CD4-positive, alpha-beta memory T cell (primary cell): ENCODE measurements at regions of chr9 and their contacts with region 1.

Region 1: GRCh38 chr9:69190086-69190862 is 16.2 kb downstream of the TJP2 start:
- DNase-seq: no peak
- H3K4me3 ChIP-seq: no peak overlapping the region
- H3K4me3 Mint-ChIP-seq: no peak overlapping the region
- H3K27ac ChIP-seq: no peak overlapping the region
- H3K27ac Mint-ChIP-seq: no peak overlapping the region
- H3K4me1 ChIP-seq: peaks cover 9% of the 10 kb centered on the region
- H3K4me1 Mint-ChIP-seq: peaks cover 2 to 10% (median 7%) of the 10 kb centered on the region in 4 donors
- H3K27me3 ChIP-seq: no peaks in the 10 kb centered on the region
- H3K27me3 Mint-ChIP-seq: no peaks in the 10 kb centered on the region

Region 2: DNA sequence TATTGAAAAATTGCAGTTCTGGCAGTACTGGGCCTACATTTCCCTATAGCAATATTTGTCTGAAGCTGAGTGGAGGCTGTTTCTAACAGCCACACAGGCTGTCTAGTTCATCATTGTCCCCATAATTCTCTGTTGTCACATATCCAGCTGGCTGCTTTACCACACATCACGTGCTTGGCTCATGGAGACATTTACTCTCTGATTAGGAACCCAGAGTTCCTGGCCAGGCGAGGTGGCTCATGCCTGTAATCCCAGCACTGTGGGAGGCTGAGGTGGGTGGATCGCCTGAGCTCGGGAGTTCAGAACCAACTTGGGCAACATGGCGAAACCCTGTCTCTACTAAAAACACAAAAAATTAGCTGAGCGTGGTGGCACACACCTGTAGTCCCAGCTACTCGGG is 752.5 kb before region 1 on chr9:
- CTCF ChIA-PET with region 1: no interaction called
- POLR2A ChIA-PET with region 1: no interaction called
- intact Hi-C with region 1: no loop called
- DNase-seq: no peak
- H3K4me3 ChIP-seq: no peak overlapping the region
- H3K4me3 Mint-ChIP-seq: no peak overlapping the region
- H3K27ac ChIP-seq: no peak overlapping the region
- H3K27ac Mint-ChIP-seq: no peak overlapping the region
- H3K4me1 ChIP-seq: no peaks in the 10 kb centered on the region
- H3K4me1 Mint-ChIP-seq: no peaks in the 10 kb centered on the region
- H3K27me3 ChIP-seq: no peaks in the 10 kb centered on the region
- H3K27me3 Mint-ChIP-seq: peaks cover 0 to 2% of the 10 kb centered on the region in 2 donors

Region 3: DNA sequence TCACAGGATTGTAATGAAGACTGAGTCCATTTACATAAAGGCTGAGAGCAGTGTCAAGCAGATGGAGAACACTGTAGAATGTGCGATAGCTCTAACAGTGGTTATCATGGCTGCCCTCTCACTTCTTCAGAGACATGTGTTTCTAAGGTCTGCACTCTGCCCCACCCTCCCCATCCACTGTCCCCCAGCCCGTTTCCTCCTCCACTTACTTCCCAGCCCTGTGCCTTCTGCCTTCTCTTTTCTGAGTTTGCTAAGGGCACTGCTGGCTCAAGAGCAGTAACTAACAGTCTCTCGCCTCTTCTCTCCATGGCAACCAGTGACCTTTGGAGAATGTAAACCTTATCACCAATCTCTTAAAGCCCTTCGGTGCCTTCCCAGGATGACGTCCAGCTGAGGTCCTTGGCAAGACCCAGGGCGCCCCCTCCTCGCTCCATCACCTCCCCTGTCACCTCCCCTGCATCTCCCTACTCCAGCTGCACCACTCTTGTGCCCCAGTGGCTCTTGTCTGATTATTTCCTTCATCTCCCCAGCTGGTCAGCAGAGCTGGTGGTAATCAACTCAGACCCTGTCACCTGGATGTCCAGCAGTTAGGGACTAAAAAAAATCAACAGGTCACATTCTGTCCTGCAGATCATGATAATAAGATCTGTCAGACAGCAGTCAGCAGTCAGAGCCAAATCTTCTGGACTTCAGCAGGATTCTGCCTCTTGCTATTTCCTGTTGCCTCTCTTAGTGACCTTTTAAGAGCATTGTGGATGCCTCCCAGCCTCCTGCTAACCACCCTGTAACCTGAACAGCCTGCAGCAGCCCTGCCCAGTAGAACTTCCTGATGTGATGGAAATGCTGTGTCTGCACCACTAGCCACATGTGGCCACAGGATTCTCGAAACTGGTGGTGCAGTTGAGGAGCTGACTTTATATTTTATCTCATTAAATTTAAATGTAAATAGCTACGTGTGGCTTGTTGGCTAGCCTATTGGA is 145.7 kb before region 1 on chr9:
- CTCF ChIA-PET with region 1: interaction called, 24 read pairs
- POLR2A ChIA-PET with region 1: no interaction called
- intact Hi-C with region 1: no loop called
- DNase-seq: no peak
- H3K4me3 ChIP-seq: no peak overlapping the region
- H3K4me3 Mint-ChIP-seq: no peak overlapping the region
- H3K27ac ChIP-seq: no peak overlapping the region
- H3K27ac Mint-ChIP-seq: peak overlapping the region in 5 of 7 donors; percentile 7 to 66 (median 33)
- H3K4me1 ChIP-seq: peaks cover 5% of the 10 kb centered on the region
- H3K4me1 Mint-ChIP-seq: peaks cover 15 to 37% (median 33%) of the 10 kb centered on the region in 4 donors
- H3K27me3 ChIP-seq: no peaks in the 10 kb centered on the region
- H3K27me3 Mint-ChIP-seq: no peaks in the 10 kb centered on the region

Region 4: DNA sequence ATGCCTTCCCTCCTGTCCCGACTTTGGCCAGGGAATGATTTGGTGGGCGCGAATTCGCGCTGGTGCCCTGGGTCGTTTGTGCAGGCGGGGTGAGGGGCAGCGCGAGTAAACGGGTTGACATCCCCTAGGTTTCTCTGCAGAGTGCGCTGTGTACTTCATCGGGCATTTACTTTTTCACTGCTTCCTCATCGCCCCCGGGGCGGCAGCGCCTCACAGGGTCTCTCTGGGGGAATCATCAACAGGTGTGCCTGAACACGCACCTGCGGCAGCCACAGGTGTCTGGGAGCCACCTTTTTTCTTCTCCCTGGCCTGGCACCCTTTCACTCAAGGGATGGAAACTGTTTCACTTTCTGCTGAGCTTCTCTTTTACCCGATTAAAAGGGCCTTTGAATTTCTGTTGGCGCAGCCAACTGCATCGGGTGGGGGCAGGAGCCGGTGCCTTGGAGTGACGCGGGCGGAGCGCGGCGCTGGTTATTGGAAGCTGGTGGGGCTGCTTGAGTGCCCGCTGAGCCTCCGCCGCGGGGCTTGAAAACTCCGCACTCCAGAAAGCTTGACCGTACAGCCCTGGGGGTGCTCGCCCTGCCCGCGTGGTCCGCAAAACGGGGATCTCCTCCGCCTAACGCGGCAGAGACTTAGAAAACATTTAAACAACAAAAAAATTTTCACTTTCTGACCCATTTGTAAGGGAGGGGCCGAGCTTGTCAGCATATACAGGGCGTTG is 68.3 kb before region 1 on chr9:
- CTCF ChIA-PET with region 1: interaction called, 11 read pairs
- POLR2A ChIA-PET with region 1: no interaction called
- intact Hi-C with region 1: no loop called
- DNase-seq: peak; percentile 44 to 59 (median 54)
- H3K4me3 ChIP-seq: peak overlapping the region; percentile 34 to 75
- H3K4me3 Mint-ChIP-seq: peak overlapping the region; percentile 93 to 97 (median 96)
- H3K27ac ChIP-seq: no peak overlapping the region
- H3K27ac Mint-ChIP-seq: peak overlapping the region; percentile 31 to 92 (median 87)
- H3K4me1 ChIP-seq: peaks cover 13% of the 10 kb centered on the region
- H3K4me1 Mint-ChIP-seq: peaks cover 6 to 19% (median 11%) of the 10 kb centered on the region in 4 donors
- H3K27me3 ChIP-seq: no peaks in the 10 kb centered on the region
- H3K27me3 Mint-ChIP-seq: no peaks in the 10 kb centered on the region

Region 5: GRCh38 chr9:69168709-69169217 is 21.5 kb before region 1 on chr9:
- CTCF ChIA-PET with region 1: interaction called, 15 read pairs
- POLR2A ChIA-PET with region 1: no interaction called
- intact Hi-C with region 1: no loop called
- DNase-seq: peak; percentile 25 to 55 (median 40)
- H3K4me3 ChIP-seq: peak overlapping the region in 1 of 2 donors; percentile 47
- H3K4me3 Mint-ChIP-seq: peak overlapping the region; percentile 86 to 95 (median 91)
- H3K27ac ChIP-seq: peak overlapping the region; percentile 22
- H3K27ac Mint-ChIP-seq: peak overlapping the region; percentile 41 to 95 (median 86)
- H3K4me1 ChIP-seq: peaks cover 18% of the 10 kb centered on the region
- H3K4me1 Mint-ChIP-seq: peaks cover 9 to 27% (median 17%) of the 10 kb centered on the region in 4 donors
- H3K27me3 ChIP-seq: peaks cover 10% of the 10 kb centered on the region
- H3K27me3 Mint-ChIP-seq: peaks cover 4 to 14% of the 10 kb centered on the region in 2 donors

Region 6: DNA sequence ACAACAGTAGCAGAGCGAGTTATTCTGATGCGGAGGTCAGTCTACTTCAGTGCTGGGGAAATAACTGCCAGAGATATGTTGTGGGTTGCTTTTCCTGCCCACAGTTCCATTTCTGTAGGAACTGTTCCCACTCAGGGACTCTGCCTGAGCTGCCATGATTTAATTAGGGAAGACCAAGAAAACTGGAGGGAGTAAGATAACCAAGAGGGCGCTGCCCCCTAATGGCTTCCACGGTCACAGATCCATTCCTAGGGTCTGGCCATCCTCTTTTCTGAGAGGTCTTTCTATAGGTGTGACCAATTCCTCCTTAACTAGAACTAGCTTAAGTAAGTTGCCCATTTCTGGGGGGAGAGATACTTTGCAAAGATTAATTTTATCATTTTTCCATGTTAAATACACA is 356.0 kb after region 1 on chr9:
- CTCF ChIA-PET with region 1: no interaction called
- POLR2A ChIA-PET with region 1: no interaction called
- intact Hi-C with region 1: no loop called
- DNase-seq: no peak
- H3K4me3 ChIP-seq: no peak overlapping the region
- H3K4me3 Mint-ChIP-seq: no peak overlapping the region
- H3K27ac ChIP-seq: no peak overlapping the region
- H3K27ac Mint-ChIP-seq: no peak overlapping the region
- H3K4me1 ChIP-seq: no peaks in the 10 kb centered on the region
- H3K4me1 Mint-ChIP-seq: peaks cover 0 to 6% (median 4%) of the 10 kb centered on the region in 4 donors
- H3K27me3 ChIP-seq: no peaks in the 10 kb centered on the region
- H3K27me3 Mint-ChIP-seq: peaks cover 2 to 5% of the 10 kb centered on the region in 2 donors